Activated T-helper 2 cell treated with anti-CD3 and anti-CD28 coated beads, Interferon-gamma antibody, Interleukin-2, Interleukin-4, amounts not matched to agents 10 μg/mL and 5 μg/mL and 100 μg/mL, durations not matched to agents 14 hours and 24 hours and 36 hours (primary cell): ENCODE measurements at regions of chr20 and their contacts with region 1.

Region 1: DNA sequence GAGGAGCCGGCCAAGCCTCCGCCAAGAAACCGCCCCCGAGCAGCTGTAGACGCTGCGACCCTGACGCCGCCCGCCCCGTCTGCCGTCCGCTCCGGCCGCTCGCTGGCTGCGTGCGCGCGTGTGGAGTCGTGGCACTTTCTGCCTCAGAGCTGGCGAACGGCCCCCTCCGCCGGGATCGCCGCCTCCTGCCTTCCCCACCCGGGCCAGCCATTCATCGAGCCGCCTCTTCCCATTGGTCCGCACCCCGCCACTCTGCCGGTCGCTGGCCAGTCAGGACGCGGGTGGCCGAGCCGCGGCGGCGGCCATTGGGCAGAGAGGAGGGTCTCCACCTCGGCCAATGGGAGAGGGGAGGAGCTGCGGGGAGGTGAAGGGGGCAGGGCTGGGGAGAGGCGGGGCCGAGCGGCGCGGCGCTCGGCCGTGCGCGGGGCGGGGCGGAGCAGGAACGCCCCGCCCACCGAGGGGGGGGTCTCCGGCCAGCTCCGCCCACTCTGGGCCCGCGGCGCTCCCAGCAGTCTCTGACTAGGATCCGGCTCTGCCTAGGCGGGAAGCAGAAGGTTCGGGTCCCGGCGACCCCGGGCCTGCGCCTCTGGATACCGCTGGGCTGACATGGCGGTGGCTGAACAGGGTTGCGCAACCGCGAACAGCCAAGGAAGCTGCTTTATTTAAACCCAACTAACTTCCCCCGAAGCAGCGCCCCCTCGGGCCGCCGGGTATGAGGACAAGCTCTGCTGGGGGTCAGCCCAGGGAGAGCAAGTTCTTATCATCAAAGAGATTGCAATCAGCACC is at the start of gene RRBP1:
- DNase-seq: peak; percentile 96
- H3K4me3 Mint-ChIP-seq: peak within 1 kb of the TSS; percentile 84
- H3K27ac Mint-ChIP-seq: peak within 1 kb of the TSS; percentile 84
- H3K4me1 Mint-ChIP-seq: peaks cover 30% of the 10 kb centered on the region
- H3K27me3 Mint-ChIP-seq: peaks cover 30% of the 10 kb centered on the region
- total RNA-seq, gene RRBP1: 73.1 and 73.6 TPM in 2 replicates

Region 2: DNA sequence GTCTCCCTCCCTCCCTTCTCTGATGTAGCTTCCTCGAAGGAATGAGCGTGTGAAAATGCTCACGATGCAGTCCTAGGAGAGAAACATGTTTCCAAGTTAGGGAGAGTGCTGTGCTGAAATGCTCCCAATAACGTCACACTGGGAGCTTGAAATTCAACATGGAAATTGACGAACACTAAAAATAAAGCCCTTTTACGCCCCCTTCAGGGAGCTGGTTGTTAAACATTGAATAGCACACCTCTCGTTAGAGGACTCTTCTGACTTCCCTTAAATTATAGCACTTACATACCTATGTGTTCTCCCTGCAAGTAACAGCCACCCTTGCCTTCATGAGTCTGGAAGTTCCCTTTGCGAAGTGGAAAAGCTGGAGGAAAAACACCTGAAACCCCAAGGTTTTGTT is 239.7 kb before region 1 on chr20:
- intact Hi-C with region 1: no loop called
- DNase-seq: no peak
- H3K4me3 Mint-ChIP-seq: no peak overlapping the region
- H3K27ac Mint-ChIP-seq: no peak overlapping the region
- H3K4me1 Mint-ChIP-seq: no peaks in the 10 kb centered on the region
- H3K27me3 Mint-ChIP-seq: peaks cover 2% of the 10 kb centered on the region

Region 3: GRCh38 chr20:17569616-17570346 is 112.5 kb before region 1 on chr20 and contains the start of gene DSTN:
- intact Hi-C with region 1: loop called (anchors 2 kb)
- DNase-seq: peak; percentile 85
- H3K4me3 Mint-ChIP-seq: peak within 1 kb of the TSS; percentile 93
- H3K27ac Mint-ChIP-seq: peak within 1 kb of the TSS; percentile 90
- H3K4me1 Mint-ChIP-seq: peaks cover 22% of the 10 kb centered on the region
- H3K27me3 Mint-ChIP-seq: peaks cover 9% of the 10 kb centered on the region
- total RNA-seq, gene DSTN: 61.2 and 64.3 TPM in 2 replicates

Region 4: GRCh38 chr20:17898548-17898994 is 216.3 kb after region 1 on chr20:
- intact Hi-C with region 1: loop called (anchors 1 kb)
- DNase-seq: peak; percentile 49
- H3K4me3 Mint-ChIP-seq: no peak overlapping the region
- H3K27ac Mint-ChIP-seq: no peak overlapping the region
- H3K4me1 Mint-ChIP-seq: peaks cover 30% of the 10 kb centered on the region
- H3K27me3 Mint-ChIP-seq: peaks cover 21% of the 10 kb centered on the region

Region 5: DNA sequence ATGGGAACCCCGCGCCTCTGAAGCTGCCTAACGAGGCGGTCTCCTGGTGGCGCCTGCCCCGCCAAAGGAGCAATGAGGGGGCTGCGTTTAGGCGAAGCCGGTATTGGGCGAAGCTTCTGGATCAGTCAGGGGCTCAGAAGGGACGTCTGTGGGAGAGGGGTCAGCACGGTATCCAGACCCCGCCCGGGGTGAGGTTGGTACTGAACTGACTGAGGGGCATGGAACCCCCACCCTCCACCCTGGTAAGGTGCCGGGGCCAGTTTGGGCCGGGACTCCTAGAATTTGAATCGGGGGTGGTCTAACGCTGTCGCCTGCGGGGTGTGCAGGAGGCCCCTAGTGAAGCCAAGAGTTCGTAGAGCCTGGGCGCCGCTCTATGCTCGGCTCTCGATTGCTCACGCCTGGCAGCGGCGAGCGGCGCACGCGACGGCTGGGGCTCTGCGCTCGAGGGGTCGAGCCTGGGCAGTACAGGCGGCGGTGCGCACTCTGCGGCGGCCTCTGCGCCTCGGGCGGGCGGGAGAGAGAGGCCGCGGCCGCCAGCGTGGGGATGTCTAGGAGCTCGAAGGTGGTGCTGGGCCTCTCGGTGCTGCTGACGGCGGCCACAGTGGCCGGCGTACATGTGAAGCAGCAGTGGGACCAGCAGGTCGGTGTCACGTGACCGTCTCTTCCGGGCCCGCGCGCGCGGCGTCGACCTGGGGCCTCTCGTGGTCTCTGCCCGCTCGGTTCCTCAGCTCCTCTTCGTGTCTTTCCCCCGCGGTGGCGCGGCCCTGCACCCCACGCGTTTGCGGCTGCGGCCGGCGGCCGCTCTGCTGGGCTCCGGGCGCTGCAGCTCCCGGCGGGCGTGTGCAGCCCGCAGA is 455.3 kb after region 1 on chr20 and contains the starts of genes KAT14 and PET117:
- intact Hi-C with region 1: loop called (anchors 5 kb)
- DNase-seq: peak; percentile 90
- H3K4me3 Mint-ChIP-seq: peak within 1 kb of the TSS; percentile 80
- H3K27ac Mint-ChIP-seq: peak within 1 kb of the TSS; percentile 83
- H3K4me1 Mint-ChIP-seq: peaks cover 23% of the 10 kb centered on the region
- H3K27me3 Mint-ChIP-seq: no peaks in the 10 kb centered on the region
- total RNA-seq, gene KAT14: 15.3 and 16.5 TPM in 2 replicates
- total RNA-seq, gene PET117: 15.7 and 17.0 TPM in 2 replicates